ENCODE measurements at regions of chrX and their contacts with region 1.

Region 1: DNA sequence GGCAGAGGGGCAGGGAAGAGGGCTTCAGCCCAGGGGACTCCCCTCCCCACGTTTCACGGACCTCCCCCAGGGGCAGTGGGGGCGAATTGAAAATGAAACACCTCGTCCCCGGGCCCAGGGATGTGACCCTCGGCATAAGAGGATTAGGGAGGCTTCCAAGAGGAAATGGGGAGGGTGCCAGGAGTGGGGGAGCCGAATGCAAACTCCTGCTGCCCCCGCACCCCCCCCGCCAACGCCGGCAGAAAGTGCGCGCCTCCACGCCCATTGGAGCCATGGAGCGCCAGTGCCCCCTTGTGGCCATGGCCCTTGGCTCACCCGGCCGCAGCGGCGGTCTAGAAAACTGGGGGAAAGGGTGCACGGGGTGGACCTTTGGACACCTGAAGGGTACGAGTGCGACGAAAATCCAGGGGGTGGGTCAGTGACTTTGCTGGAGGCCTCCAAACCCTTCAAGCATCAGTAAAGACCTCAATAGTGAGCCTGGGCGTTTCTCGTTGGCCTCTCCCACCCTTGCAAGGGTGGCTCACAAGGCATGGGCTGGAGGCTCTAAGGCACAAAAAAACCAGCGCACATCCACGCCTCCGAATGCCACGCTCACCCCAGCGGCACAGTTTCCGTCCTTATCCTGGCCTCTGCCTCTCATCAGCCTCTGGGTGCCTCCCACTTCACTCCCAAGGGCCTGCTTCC is 120.8 kb upstream of the PJA1 start:
- DNase-seq: peak in 4 of 5 donors; percentile 52 to 73 (median 64)
- ATAC-seq: peak; percentile 67 to 86 (median 77)
- H3K4me3 ChIP-seq: peak overlapping the region in 11 of 12 donors; percentile 30 to 60 (median 46)
- H3K27ac ChIP-seq: peak overlapping the region in 3 of 12 donors; percentile 18 to 65 (median 38)
- H3K4me1 ChIP-seq: peaks cover 0 to 20% (median 5%) of the 10 kb centered on the region in 12 donors
- H3K27me3 ChIP-seq: peaks cover 0 to 25% (median 0%) of the 10 kb centered on the region in 9 donors
- CTCF ChIP-seq: peak; percentile 67 to 89 (median 81)
- POLR2A ChIP-seq: no peak

Region 2: GRCh38 chrX:68822641-68823410 is 463.2 kb before region 1 on chrX:
- intact Hi-C with region 1: loop called (anchors 2 to 5 kb)
- DNase-seq: peak in 4 of 5 donors; percentile 40 to 62 (median 54)
- ATAC-seq: peak; percentile 49 to 90 (median 86)
- H3K4me3 ChIP-seq: no peak overlapping the region
- H3K27ac ChIP-seq: no peak overlapping the region
- H3K4me1 ChIP-seq: peaks cover 0 to 5% (median 0%) of the 10 kb centered on the region in 12 donors
- H3K27me3 ChIP-seq: peaks cover 0 to 25% (median 0%) of the 10 kb centered on the region in 9 donors
- CTCF ChIP-seq: peak; percentile 34 to 70 (median 64)
- POLR2A ChIP-seq: no peak

Region 3: GRCh38 chrX:69060631-69061408 is 225.2 kb before region 1 on chrX:
- intact Hi-C with region 1: loop called in 3 of 10 experiments (anchors 10 kb)
- DNase-seq: peak in 4 of 5 donors; percentile 38 to 54 (median 43)
- ATAC-seq: peak; percentile 61 to 91 (median 80)
- H3K4me3 ChIP-seq: no peak overlapping the region
- H3K27ac ChIP-seq: no peak overlapping the region
- H3K4me1 ChIP-seq: peaks cover 0 to 6% (median 0%) of the 10 kb centered on the region in 12 donors
- H3K27me3 ChIP-seq: peaks cover 0 to 18% (median 0%) of the 10 kb centered on the region in 9 donors
- CTCF ChIP-seq: peak; percentile 14 to 63 (median 49)
- POLR2A ChIP-seq: no peak

Region 4: DNA sequence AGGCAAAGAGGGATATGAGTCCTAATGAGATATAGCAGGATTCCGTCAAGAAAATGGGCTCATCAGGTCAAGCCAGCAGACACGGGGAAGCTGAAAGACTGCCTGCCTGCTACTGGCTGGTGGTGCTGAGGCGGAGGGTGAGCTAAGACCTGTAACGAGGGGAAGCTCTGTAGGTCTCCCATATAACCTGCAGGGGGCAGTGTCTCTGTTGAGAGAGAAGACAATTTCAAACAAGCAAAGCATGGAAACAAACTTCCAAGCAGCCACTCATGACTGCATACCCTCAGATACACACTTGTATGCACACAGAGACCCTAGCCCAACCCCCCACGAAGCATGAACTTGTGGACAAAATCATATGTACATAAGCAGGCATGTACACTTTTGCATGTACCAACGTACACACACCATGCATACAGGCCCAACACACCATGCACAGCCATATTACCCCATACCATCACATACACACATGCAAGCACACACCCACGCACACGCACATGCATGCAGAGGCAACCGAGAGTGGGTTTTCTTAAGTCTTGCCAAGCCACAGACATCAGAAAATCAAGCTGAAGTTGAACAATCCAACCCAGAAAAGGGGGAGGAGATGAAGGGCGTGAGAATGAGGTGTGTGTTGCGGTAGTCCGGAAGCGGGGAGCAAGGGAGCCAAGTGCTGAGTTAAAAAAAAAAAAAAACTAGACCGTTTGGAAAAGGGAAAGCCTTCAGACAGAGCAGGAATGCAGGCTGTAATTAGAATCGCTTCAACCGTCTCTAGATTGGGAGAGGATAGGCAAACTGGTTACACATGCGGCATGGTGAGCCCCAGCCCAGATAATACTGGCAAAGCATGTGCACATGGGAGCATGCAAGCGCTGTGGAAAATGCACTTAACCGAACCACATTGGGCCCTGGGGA is 191.8 kb before region 1 on chrX:
- intact Hi-C with region 1: loop called in 5 of 10 experiments (anchors 10 kb)
- DNase-seq: peak in 2 of 5 donors; percentile 31 to 43
- ATAC-seq: peak in 3 of 4 donors; percentile 27 to 50 (median 30)
- H3K4me3 ChIP-seq: no peak overlapping the region
- H3K27ac ChIP-seq: no peak overlapping the region
- H3K4me1 ChIP-seq: no peaks in the 10 kb centered on the region
- H3K27me3 ChIP-seq: peaks cover 0 to 6% (median 0%) of the 10 kb centered on the region in 9 donors
- CTCF ChIP-seq: peak; percentile 23 to 62 (median 46)
- POLR2A ChIP-seq: no peak

Region 5: GRCh38 chrX:69158166-69158980 is 127.7 kb before region 1 on chrX:
- intact Hi-C with region 1: loop called in 1 of 10 experiments (anchors 10 kb)
- DNase-seq: peak in 4 of 5 donors; percentile 69 to 86 (median 79)
- ATAC-seq: peak; percentile 26 to 84 (median 73)
- H3K4me3 ChIP-seq: no peak overlapping the region
- H3K27ac ChIP-seq: peak overlapping the region in 1 of 12 donors; percentile 14
- H3K4me1 ChIP-seq: peaks cover 0 to 13% (median 5%) of the 10 kb centered on the region in 12 donors
- H3K27me3 ChIP-seq: peaks cover 0 to 23% (median 0%) of the 10 kb centered on the region in 9 donors
- CTCF ChIP-seq: peak; percentile 21 to 61 (median 43)
- POLR2A ChIP-seq: no peak

Region 6: GRCh38 chrX:69222103-69223090 is 63.6 kb before region 1 on chrX:
- intact Hi-C with region 1: loop called in 2 of 10 experiments (anchors 10 kb)
- DNase-seq: peak; percentile 43 to 78 (median 58)
- ATAC-seq: peak; percentile 61 to 88 (median 80)
- H3K4me3 ChIP-seq: no peak overlapping the region
- H3K27ac ChIP-seq: no peak overlapping the region
- H3K4me1 ChIP-seq: peaks cover 0 to 8% (median 0%) of the 10 kb centered on the region in 12 donors
- H3K27me3 ChIP-seq: peaks cover 0 to 20% (median 0%) of the 10 kb centered on the region in 9 donors
- CTCF ChIP-seq: peak; percentile 60 to 75 (median 70)
- POLR2A ChIP-seq: no peak

Region 7: DNA sequence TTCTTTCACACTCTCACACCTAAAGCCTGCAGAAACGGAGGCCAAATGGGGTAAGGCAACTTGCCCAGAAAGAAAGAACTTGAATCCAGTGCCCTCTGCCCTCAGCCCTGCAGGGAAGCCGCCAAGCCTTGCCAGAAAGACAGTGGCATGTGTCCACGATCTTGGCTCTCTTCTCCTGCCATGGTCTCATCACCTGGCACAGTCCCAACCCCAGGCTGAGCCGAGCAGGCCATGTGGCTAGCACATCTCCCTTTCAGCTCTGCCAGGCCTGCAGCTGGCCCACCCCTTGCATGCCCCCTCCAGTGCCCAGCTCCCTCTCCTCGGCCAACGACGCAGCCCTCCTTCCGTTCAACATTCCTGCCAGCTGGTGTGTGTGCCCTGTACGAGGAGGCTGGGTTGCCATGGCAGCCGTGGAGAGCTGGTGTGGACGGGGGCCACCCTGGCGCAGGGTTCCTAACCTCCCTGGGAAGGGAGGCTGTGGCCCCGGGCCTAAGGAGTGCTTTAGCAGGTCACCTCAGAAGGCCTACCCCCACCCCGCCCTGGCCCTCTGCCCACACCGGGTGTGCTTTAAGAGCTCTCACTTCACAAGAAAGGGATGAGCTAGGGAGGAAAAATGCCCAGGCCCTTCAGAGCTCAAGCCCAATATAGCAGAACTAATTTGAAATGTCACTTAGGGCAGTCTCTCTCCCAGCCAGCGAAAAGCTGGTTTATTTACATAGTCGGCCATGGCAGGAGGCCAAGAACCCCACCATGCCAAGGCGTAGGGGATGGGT is 47.7 kb before region 1 on chrX:
- intact Hi-C with region 1: loop called in 6 of 10 experiments (anchors 5 to 10 kb)
- DNase-seq: peak in 3 of 5 donors; percentile 23 to 66 (median 53)
- ATAC-seq: peak; percentile 68 to 84 (median 76)
- H3K4me3 ChIP-seq: no peak overlapping the region
- H3K27ac ChIP-seq: peak overlapping the region in 7 of 12 donors; percentile 34 to 60 (median 45)
- H3K4me1 ChIP-seq: peaks cover 0 to 5% (median 0%) of the 10 kb centered on the region in 12 donors
- H3K27me3 ChIP-seq: peaks cover 0 to 20% (median 0%) of the 10 kb centered on the region in 9 donors
- CTCF ChIP-seq: no peak
- POLR2A ChIP-seq: no peak

Region 8: DNA sequence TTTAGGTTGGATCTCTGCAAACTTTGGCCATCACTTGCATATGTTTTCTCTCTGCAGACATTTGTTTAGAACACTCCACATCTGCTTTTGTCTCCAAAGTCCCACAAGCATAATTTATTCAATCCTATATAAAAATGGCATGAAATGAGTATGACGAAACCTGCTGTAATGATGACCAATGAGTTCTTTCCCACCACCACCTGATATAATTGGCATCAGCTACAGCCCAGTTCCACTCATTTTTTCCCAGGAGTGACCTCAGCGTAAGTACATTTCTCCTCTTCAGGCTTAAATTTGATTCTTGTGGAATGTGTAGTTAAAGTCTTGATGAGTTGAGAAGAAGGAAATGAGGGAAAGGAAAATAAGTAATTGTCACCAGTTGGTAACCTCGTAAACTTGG is 558.6 kb after region 1 on chrX:
- intact Hi-C with region 1: no loop called
- DNase-seq: no peak
- ATAC-seq: no peak
- H3K4me3 ChIP-seq: no peak overlapping the region
- H3K27ac ChIP-seq: no peak overlapping the region
- H3K4me1 ChIP-seq: no peaks in the 10 kb centered on the region
- H3K27me3 ChIP-seq: peaks cover 0 to 4% (median 0%) of the 10 kb centered on the region in 9 donors
- CTCF ChIP-seq: no peak
- POLR2A ChIP-seq: no peak

Measured in heart left ventricle (tissue), 16 donors.